Mammary epithelial cell (primary cell): ENCODE measurements at regions of chr9 and their contacts with region 1.

Region 1: DNA sequence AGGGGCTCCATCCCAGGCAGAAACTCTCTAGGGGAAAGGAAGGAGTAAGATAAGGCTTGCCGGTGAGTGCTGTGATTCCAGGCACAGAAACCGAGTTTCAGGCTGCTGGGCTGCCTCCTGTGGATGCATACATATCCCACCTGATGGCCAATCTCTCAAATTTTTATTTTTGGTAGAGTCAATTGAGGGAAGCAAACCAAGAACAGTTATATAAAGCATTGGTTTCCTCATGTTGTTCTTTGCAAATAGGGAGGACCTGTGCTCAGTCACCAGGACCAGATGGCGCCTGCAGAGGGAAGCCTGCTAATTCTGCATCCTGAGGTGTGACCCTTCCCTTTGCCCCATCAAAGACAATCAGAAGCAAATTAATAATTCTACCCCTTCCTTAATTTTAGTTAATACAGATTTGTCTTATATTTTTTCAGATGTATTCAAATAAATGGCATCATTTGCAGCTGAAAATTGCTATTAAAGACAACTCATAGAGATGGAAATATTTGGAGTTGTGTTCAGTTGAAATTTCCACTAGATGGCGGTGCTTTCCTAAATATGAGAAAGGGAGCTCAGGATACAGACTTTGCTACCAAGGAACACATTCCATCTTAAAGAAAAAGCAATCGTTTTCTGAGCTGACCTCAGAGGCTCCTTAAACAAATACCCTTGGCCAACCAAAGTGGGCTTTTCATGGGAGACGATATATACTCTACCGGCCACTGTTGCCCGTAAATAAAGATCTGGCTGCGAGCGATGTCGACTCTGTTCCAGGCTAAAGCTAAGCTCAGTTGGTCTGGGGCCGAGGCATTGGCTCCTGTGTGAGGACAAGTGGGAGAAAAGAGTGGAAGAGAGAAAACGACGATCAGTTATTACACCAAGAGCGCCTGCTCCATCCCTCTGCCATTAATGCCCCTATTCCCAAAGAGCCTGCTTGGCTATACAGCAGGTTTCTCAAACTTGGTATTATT is 225.7 kb upstream of the KLF9 start:
- DNase-seq: peak; percentile 32
- H3K4me3 ChIP-seq: no peak overlapping the region
- H3K27ac ChIP-seq: no peak overlapping the region
- H3K4me1 ChIP-seq: no peaks in the 10 kb centered on the region
- H3K27me3 ChIP-seq: no peaks in the 10 kb centered on the region
- CTCF ChIP-seq: peak; percentile 50 to 68

Region 2: DNA sequence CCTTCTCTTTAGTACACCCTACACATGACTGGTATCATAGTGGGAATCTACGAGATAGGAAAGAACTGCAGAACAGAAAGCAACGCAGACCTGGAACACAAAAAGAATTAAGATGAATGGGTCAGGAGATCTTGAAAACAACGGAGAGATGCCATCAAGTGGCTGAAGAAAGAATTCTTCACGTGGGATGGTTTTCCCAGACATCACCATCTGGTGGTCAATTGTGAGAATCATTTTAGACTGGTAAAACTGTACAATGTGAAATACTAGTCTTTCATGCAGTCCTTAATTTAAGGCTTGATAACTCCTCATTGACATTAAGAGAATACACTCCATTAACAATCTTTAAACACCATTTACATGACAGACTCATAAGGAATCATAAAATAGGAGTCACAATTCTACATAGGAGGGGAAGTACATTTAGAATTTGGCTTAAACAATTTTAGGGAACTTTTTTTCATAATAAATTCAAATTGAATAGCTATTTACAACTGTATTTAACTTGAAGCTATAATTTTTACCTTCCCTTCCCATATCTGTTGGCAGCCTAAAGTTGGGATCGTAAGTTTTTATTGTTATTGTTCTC is 609.7 kb after region 1 on chr9:
- CTCF ChIA-PET with region 1: interaction called, 25 read pairs
- dilution Hi-C with region 1: no loop called
- in situ Hi-C with region 1: loop called (anchors 5 to 10 kb)
- intact Hi-C with region 1: loop called (anchors 1 kb)
- DNase-seq: peak; percentile 53
- H3K4me3 ChIP-seq: no peak overlapping the region
- H3K27ac ChIP-seq: no peak overlapping the region
- H3K4me1 ChIP-seq: no peaks in the 10 kb centered on the region
- H3K27me3 ChIP-seq: no peaks in the 10 kb centered on the region
- CTCF ChIP-seq: peak; percentile 82 to 83